ENCODE measurements at regions of chr11 and their contacts with region 1.

Region 1: GRCh38 chr11:122202951-122203456 is 87.0 kb upstream of the BLID start:
- DNase-seq: no peak
- ATAC-seq: peak; percentile 93
- H3K4me3 ChIP-seq: peak overlapping the region; percentile 40 to 60
- H3K27ac ChIP-seq: peak overlapping the region; percentile 78
- H3K4me1 ChIP-seq: peaks cover 10% of the 10 kb centered on the region
- H3K27me3 ChIP-seq: no peaks in the 10 kb centered on the region
- CTCF ChIP-seq: peak; percentile 100

Region 2: DNA sequence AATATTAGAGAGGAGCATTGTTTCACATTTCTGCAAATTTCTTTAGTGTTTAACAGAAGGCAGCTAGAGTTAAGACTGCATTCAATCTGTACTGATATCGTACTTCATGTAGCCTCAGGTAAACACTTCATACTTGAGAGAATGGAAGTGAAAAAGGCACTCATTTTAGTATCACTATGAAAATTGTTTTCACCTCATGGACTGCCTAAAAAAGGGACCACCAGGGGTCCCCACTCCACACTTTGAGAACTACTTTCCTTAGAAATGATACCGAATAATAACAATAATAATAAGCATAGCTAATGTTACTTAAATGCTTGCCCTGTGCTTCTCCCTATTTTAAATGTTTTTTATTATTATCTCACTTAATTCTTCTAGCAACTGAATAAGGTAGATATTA is 182.1 kb before region 1 on chr11:
- CTCF ChIA-PET with region 1: interaction called, 4 read pairs
- POLR2A ChIA-PET with region 1: no interaction called
- in situ Hi-C with region 1: no loop called
- intact Hi-C with region 1: loop called (anchors 2 kb)
- DNase-seq: no peak
- ATAC-seq: no peak
- H3K4me3 ChIP-seq: no peak overlapping the region
- H3K27ac ChIP-seq: no peak overlapping the region
- H3K4me1 ChIP-seq: no peaks in the 10 kb centered on the region
- H3K27me3 ChIP-seq: no peaks in the 10 kb centered on the region
- CTCF ChIP-seq: peak; percentile 62; the same call in 1 of the 2 replicates

Region 3: DNA sequence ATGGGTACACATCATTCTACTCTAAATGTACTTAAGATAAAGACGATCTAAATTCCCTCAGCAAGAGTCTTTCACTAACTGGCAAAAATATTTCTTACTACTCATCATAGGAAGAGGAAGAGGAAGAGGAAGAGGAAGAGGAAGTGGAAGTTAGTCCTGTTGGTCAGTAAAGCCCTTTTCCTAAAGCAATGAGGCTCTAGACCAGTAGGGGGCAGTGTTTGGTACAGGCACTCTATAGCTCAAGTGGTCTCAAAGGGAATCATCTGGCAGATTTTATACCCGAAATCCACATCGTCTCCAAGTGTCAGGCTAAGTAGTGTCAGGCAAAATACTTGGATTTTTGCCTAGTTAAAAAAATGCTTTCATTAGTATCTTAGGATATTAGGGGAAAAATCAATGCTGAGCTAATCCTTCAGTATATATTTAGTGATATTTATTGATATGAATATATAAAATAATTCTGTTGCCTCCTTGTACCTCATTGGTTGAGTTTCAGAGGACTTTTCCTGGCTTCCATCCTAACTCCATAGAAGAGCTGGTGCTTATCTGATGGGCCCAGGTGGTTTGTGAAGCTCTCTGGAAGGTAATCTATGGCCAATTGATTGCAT is 94.7 kb before region 1 on chr11:
- CTCF ChIA-PET with region 1: interaction called, 6 read pairs
- POLR2A ChIA-PET with region 1: no interaction called
- in situ Hi-C with region 1: no loop called
- intact Hi-C with region 1: loop called (anchors 5 kb)
- DNase-seq: no peak
- ATAC-seq: no peak
- H3K4me3 ChIP-seq: no peak overlapping the region
- H3K27ac ChIP-seq: no peak overlapping the region
- H3K4me1 ChIP-seq: no peaks in the 10 kb centered on the region; the same call in 1 of the 2 replicates
- H3K27me3 ChIP-seq: no peaks in the 10 kb centered on the region
- CTCF ChIP-seq: peak; percentile 87

Region 4: GRCh38 chr11:122140500-122140899 is 62.5 kb before region 1 on chr11:
- CTCF ChIA-PET with region 1: interaction called, 4 read pairs
- POLR2A ChIA-PET with region 1: interaction called, 10 read pairs
- in situ Hi-C with region 1: no loop called
- intact Hi-C with region 1: no loop called
- DNase-seq: no peak
- ATAC-seq: peak; percentile 24
- H3K4me3 ChIP-seq: no peak overlapping the region
- H3K27ac ChIP-seq: peak overlapping the region; percentile 49
- H3K4me1 ChIP-seq: peaks cover 52% of the 10 kb centered on the region
- H3K27me3 ChIP-seq: no peaks in the 10 kb centered on the region
- CTCF ChIP-seq: no peak

Region 5: DNA sequence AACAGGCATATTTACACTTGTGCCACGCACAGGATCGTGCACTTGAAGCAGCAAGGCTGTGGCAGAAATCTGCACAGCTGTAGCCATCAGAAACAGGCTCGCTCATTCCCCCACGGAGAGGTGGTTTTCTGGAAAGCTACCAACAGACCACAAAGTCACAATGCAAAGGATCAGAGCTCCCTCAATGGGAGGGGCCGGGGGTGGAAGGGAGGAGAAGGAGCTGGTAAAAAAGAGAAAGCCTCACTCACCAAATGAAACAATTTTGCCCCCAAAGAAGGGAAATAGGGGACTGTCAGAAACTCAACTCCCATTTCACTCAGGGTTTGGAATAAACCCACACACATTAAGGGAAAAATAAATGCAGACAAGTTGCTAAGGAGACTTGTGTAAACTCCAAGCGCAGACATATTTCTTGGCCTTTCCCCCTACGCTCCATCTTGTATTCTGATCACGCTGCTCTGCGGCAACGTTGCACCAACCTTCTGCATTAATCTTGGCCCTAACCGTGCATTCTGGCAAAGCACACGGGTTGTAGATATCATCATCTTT is 43.8 kb before region 1 on chr11:
- CTCF ChIA-PET with region 1: interaction called, 6 read pairs
- POLR2A ChIA-PET with region 1: no interaction called
- in situ Hi-C with region 1: no loop called
- intact Hi-C with region 1: loop called (anchors 5 kb)
- DNase-seq: no peak
- ATAC-seq: peak; percentile 47
- H3K4me3 ChIP-seq: peak overlapping the region; percentile 44 to 73
- H3K27ac ChIP-seq: peak overlapping the region; percentile 98
- H3K4me1 ChIP-seq: peaks cover 52% of the 10 kb centered on the region
- H3K27me3 ChIP-seq: no peaks in the 10 kb centered on the region
- CTCF ChIP-seq: no peak

Measured in Panc1 (cell line).